Right ventricle myocardium superior (tissue), 1 donor: ENCODE measurements at regions of chr15 and their contacts with region 1.

Region 1: GRCh38 chr15:64731012-64731806 is 44.2 kb downstream of the RBPMS2 start:
- DNase-seq: peak; percentile 91
- ATAC-seq: peak; percentile 81

Region 2: GRCh38 chr15:64687688-64688087 is 43.5 kb before region 1 on chr15:
- intact Hi-C with region 1: loop called (anchors 2 kb)
- DNase-seq: no peak
- ATAC-seq: no peak

Region 3: DNA sequence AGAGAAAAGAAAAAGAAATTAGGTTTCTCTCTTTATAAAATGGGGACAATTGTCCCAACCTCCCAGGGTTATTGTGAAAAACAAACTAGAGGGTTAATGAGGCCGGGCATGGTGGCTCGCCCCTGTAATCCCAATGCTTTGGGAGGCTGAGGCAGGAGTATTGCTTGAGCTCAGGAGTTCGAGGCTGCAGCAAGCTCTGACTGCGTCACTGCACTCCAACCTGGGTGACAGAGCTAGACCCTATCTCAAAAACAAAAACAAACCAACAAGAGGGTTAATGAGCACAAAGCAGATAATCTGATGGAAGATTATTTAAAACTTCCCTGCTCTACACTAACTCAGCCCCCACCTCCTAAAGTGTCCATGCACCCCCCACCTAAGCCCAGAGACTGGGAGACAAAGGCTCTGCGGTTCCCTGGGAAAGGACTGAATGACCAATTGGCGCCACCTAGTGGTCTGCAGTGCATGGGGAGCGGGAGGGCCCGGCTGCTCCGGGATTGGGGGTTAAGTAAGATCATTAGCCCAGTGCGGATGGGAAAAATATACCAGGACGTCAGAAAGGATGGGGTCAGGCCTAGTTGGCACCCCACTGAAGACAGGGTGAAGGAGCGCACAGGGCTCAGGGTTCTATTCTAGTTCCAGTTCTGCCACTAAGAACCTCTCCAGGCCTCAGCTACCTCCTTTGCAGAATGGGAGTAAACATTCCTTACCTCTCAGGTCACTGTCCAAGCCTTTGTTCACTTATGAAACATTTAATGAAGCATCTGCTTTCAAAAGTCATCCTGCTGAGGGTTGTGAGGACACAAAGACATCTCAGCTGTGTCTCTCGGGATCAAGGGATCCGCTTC is 78.7 kb after region 1 on chr15:
- intact Hi-C with region 1: loop called (anchors 1 kb)
- DNase-seq: peak; percentile 86
- ATAC-seq: peak; percentile 92

Region 4: GRCh38 chr15:64883997-64884511 is 152.8 kb after region 1 on chr15:
- intact Hi-C with region 1: no loop called
- DNase-seq: peak; percentile 82
- ATAC-seq: peak; percentile 76

Region 5: DNA sequence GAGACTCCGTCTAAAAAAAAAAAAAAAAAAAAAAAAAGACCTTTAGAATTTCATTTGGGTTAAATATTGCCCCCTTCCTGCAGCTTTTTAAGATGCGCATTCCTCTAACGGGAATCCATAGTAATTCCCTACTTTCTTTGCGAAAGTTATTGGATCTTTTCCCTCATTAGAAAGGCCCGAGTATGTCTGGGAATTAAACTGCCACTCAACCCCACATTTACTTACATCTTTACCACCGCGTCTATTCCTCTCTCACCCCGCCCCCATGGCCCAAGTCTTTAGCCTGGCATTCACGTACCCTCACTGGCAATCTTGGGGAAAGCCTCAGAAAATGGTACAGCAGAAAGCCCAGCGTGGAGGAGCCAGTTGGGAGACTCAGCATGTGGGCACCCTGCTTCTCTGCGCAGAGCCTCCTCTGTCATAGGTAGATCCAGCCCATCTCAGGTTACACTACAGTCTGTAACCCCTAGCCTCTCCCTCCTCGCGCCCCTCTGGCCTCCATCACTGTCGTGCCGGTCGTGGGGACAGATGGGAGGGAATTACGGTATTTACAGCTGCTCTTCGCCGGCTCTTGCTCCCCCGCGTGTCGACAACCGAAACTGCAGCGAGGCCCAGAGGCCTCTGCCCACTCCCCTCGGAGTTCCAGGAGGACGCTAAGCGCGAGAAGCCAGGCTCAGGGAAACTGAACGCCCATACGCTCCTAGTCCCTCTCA is 174.1 kb after region 1 on chr15:
- intact Hi-C with region 1: loop called (anchors 10 kb)
- DNase-seq: peak; percentile 92
- ATAC-seq: peak; percentile 96

Region 6: DNA sequence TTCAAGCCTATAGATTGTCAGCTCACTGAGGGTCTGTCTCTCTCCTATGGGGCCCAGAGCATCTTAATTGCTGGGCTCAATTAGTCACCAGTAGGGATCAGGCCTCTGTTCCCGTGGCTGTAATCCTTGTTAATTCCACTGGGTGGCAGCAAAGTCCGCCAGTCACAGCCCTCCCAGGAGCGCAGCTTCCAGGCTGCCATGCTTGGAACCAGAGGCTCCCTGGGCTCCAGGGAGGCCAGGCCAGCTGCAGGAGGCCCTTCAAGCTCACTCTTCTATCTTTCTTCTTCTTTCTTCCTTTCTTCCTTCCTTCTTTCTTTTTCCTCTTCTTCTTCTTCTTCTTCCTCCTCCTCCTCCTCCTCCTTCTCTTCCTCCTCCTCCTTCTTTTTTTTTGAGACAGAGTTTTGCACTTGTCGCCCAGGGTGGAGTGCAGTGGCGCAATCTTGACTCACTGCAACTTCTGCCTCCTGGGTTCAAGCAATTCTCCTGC is 587.7 kb after region 1 on chr15:
- intact Hi-C with region 1: no loop called
- DNase-seq: peak; percentile 82
- ATAC-seq: peak; percentile 91